ENCODE measurements at regions of chr1 and their contacts with region 1.

Region 1: DNA sequence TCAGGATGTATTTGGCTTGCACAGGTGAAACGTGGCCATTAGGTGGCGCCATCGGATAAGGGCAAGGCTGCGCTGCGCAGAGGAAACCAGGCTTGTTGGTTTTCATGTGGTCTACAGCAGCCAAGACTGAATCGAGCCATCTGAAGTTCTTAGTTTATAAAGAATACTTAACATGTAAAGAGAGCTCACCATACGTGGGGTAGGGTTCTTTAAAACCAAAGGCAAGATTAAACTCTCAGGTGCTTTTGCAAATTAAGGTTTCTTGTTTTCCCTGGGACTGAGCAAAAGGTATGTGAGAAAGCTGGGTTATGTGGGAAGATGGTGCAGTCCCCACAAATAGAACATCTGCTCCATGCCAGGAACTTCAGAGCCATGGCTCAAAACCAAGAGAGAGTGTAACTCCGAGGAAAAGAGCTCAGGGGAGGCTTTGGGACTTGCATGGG is 9.3 kb downstream of the MASP2 start:
- DNase-seq: peak; percentile 85
- H3K4me3 Mint-ChIP-seq: no peak overlapping the region
- H3K27ac Mint-ChIP-seq: no peak overlapping the region
- H3K4me1 Mint-ChIP-seq: no peaks in the 10 kb centered on the region
- H3K27me3 Mint-ChIP-seq: no peaks in the 10 kb centered on the region
- CTCF ChIP-seq: peak; percentile 94

Region 2: DNA sequence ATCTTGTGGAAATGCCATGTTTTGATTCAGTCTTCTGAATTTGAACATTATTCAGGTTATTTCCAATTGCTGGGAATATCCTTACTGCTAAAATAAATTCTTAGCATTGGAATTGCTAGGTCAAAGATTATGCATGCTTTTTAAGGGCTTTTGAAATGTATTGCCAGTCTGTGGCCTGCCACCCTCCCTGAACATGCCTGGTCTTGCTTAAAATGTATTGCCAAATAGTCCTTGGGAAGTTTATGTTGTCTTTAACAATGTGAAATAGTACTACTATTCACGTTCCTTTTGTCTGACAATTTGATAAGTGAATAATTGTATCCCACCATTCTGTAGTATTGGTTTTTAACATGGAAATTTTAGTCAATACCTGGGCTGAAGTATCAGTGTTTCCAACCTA is 11.7 kb before region 1 on chr1:
- CTCF ChIA-PET with region 1: interaction called, 12 read pairs
- POLR2A ChIA-PET with region 1: interaction called, 4 read pairs
- intact Hi-C with region 1: no loop called
- DNase-seq: peak; percentile 32
- H3K4me3 Mint-ChIP-seq: no peak overlapping the region
- H3K27ac Mint-ChIP-seq: peak overlapping the region; percentile 89
- H3K4me1 Mint-ChIP-seq: peaks cover 19% of the 10 kb centered on the region
- H3K27me3 Mint-ChIP-seq: no peaks in the 10 kb centered on the region
- CTCF ChIP-seq: no peak

Region 3: GRCh38 chr1:11059990-11060830 is 22.4 kb after region 1 on chr1 and contains the start of gene SRM:
- CTCF ChIA-PET with region 1: interaction called, 24 read pairs
- POLR2A ChIA-PET with region 1: interaction called, 16 read pairs
- intact Hi-C with region 1: no loop called
- DNase-seq: peak; percentile 88
- H3K4me3 Mint-ChIP-seq: peak within 1 kb of the TSS; percentile 97
- H3K27ac Mint-ChIP-seq: peak within 1 kb of the TSS; percentile 92
- H3K4me1 Mint-ChIP-seq: peaks cover 7% of the 10 kb centered on the region
- H3K27me3 Mint-ChIP-seq: no peaks in the 10 kb centered on the region
- CTCF ChIP-seq: peak; percentile 43
- total RNA-seq, gene SRM: 284 and 327 TPM in 2 replicates

Region 4: DNA sequence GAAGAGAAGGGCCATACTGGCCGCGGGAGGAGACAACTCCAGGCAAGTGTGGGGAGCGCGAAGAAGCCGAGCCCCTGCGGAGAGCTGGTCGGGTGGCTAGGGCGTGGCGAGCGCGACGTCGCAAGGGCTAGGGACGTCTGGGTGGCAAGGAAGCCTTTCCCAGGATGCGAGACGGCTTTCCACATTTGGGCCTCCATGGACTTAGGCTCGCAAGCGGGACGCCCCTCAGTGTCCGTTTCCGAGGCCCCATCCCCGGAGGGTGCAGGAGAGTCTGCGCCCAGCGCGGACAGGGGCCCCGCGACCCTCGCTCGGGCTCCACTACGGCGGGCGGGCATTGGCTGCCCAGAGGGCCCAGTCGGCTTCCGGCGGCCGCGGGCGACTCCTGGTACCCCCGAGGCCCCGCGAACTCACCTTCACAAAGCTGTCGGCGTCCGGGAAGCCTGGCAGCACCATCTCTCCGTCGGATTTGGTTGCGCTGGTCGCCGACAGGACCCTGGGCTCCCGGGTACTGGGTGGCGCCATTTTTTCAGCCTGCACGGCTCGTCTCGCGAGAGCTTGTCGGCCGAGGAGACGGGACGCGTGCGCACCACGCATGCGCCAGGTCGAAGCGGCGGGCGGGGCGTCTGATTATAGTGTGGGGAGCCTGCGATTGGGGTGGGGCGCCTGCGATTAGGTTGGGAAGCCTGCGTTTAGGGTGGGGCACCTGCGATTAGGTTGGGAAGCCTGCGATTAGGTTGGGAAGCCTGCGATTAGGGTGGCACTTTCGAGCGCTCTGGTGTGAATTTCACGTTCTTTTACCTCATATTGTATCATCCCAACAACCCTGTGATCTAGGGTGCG is 61.8 kb after region 1 on chr1 and contains the start of gene EXOSC10:
- CTCF ChIA-PET with region 1: interaction called, 10 read pairs
- POLR2A ChIA-PET with region 1: no interaction called
- intact Hi-C with region 1: no loop called
- DNase-seq: peak; percentile 91
- H3K4me3 Mint-ChIP-seq: peak within 1 kb of the TSS; percentile 98
- H3K27ac Mint-ChIP-seq: peak within 1 kb of the TSS; percentile 94
- H3K4me1 Mint-ChIP-seq: peaks cover 7% of the 10 kb centered on the region
- H3K27me3 Mint-ChIP-seq: no peaks in the 10 kb centered on the region
- CTCF ChIP-seq: no peak
- total RNA-seq, gene EXOSC10: 65.1 and 70.5 TPM in 2 replicates

Region 5: DNA sequence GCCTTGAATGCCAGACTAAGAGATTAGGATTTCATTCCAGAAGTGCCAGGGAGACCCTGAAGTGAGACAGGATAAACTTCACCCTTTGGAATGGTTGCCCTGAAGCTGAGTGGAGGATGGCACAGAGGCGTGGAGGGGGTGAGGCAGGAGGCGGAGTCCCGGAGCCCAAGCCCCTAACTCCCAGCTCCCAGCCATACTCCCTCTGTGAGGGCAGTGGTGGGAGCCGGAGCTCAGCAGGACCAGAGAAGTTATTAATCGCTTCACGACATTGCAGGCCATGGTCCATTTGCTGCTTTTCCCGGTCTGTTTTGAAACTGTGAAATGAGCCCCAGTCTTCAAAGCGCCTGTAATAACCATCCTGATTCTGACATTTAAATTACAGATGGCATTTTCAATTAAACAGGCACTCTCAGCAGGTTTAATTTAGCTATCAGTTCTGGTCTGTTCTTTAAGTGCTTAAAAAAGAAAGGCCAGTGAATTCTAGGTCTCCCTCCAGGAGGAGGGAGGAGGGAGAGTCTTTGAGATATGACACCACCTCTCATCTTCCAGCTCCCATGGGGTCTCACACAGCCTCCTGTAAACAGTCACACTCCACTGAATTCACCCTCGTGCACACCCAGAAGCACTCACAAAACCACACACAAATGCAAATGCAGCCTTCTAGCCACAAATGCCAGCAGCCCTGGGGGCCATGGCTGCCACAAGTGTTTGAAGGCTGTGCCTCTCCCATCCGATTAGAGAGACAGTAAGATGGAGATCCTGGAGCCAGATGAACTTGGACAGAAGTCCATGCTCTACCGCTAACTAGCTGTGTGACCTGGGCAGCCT is 596.8 kb after region 1 on chr1:
- CTCF ChIA-PET with region 1: interaction called, 15 read pairs
- POLR2A ChIA-PET with region 1: no interaction called
- intact Hi-C with region 1: no loop called
- DNase-seq: no peak
- H3K4me3 Mint-ChIP-seq: no peak overlapping the region
- H3K27ac Mint-ChIP-seq: no peak overlapping the region
- H3K4me1 Mint-ChIP-seq: no peaks in the 10 kb centered on the region
- H3K27me3 Mint-ChIP-seq: peaks cover 27% of the 10 kb centered on the region
- CTCF ChIP-seq: no peak

Region 6: DNA sequence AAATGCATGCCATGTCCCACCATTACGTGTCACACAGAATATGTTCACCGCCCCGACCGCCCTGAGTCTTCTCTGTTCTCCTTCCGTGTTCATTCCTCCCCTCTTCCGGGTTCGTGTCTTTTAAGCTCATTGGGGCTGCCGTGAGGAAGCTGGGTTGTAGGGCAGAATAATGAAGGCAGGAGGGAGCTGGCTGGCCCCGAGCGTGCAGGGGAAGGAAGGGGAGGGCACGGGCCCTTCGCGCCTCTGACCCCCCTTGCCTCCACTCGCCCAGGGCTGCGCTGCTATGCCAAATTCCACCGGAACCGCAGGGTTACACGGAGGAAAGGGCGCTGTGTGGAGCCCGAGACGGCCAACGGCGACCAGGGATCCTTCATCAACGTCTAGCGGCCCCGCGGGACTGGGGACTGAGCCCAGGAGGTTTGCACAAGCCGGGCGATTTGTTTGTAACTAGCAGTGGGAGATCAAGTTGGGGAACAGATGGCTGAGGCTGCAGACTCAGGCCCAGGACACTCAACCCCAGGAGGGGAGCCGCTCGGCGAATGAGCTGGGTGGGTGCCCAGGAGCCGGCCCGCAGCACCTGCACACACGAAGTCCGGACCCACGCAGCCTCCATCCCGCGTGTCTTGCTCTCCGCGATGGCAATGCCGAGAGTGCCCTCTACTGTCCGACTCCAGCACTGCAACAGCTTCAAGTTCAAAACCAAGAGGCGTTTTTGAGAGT is 681.7 kb after region 1 on chr1:
- CTCF ChIA-PET with region 1: interaction called, 4 read pairs
- POLR2A ChIA-PET with region 1: no interaction called
- intact Hi-C with region 1: loop called (anchors 2 kb)
- DNase-seq: peak; percentile 47
- H3K4me3 Mint-ChIP-seq: peak overlapping the region; percentile 53
- H3K27ac Mint-ChIP-seq: no peak overlapping the region
- H3K4me1 Mint-ChIP-seq: peaks cover 5% of the 10 kb centered on the region
- H3K27me3 Mint-ChIP-seq: no peaks in the 10 kb centered on the region
- CTCF ChIP-seq: peak; percentile 89

Region 7: GRCh38 chr1:12244078-12244477 is 1206.3 kb after region 1 on chr1:
- CTCF ChIA-PET with region 1: no interaction called
- POLR2A ChIA-PET with region 1: no interaction called
- intact Hi-C with region 1: no loop called
- DNase-seq: peak; percentile 38
- H3K4me3 Mint-ChIP-seq: no peak overlapping the region
- H3K27ac Mint-ChIP-seq: peak overlapping the region; percentile 66
- H3K4me1 Mint-ChIP-seq: peaks cover 18% of the 10 kb centered on the region
- H3K27me3 Mint-ChIP-seq: no peaks in the 10 kb centered on the region
- CTCF ChIP-seq: no peak